ENCODE measurements at regions of chr9 and their contacts with region 1.

Region 1: DNA sequence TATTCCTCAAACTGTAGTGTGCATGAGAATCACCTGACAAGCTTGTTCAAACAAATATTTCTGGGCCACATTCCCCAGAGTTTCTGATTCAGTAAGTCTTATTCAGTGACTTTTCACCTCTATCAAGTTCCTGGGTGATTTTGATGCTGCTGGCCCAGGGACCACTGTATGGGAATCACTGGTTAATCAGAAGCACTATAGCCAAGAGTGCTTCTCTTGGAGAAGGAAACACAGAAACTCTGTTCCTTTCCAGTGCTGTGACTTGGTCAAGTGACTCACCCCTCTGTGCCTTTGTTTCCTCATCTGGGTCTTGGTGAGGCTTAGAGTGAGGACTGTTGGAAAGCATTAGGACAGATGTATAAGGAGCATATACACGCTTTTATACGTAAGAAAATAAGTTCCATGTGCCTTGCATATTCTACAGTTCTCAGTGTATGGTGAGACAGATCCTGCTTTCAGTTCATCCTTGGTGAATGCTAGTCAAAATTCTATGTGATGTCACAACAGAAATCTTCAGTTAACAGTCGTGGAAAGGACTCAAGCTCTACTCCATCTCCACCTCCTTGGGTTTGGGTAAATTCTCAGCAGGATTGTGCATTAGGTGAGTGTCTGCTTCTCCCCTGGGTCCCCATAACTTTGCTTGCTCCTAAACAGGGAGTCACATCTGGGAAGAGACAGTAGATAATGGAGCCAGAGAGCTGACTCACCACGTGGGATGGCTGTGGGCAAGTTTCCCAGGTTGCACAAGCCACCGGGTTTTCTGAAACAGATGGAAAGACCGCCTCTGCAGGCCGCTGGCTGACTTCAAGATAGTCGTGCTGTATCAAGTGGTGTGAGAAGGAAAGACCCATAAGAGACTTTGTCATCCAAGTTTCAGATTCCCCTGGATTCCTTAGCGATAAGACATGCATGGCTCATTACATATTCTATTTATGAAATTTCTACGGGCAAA is 117.0 kb downstream of the NXNL2 start:
- DNase-seq: peak; percentile 87 to 94
- ATAC-seq: peak; percentile 92
- H3K4me3 ChIP-seq: no peak overlapping the region
- H3K27ac ChIP-seq: peak overlapping the region in 1 of 2 donors; percentile 23
- H3K4me1 ChIP-seq: peaks cover 4 to 5% of the 10 kb centered on the region in 2 donors
- H3K27me3 ChIP-seq: no peaks in the 10 kb centered on the region

Region 2: GRCh38 chr9:88559661-88560060 is 92.3 kb before region 1 on chr9:
- intact Hi-C with region 1: no loop called
- DNase-seq: peak in 1 of 2 donors; percentile 34
- ATAC-seq: no peak
- H3K4me3 ChIP-seq: no peak overlapping the region
- H3K27ac ChIP-seq: no peak overlapping the region
- H3K4me1 ChIP-seq: no peaks in the 10 kb centered on the region
- H3K27me3 ChIP-seq: no peaks in the 10 kb centered on the region

Region 3: GRCh38 chr9:88578121-88579054 is 73.6 kb before region 1 on chr9:
- intact Hi-C with region 1: no loop called
- DNase-seq: peak; percentile 88 to 96
- ATAC-seq: peak; percentile 93
- H3K4me3 ChIP-seq: no peak overlapping the region
- H3K27ac ChIP-seq: no peak overlapping the region
- H3K4me1 ChIP-seq: no peaks in the 10 kb centered on the region
- H3K27me3 ChIP-seq: no peaks in the 10 kb centered on the region

Region 4: GRCh38 chr9:88777498-88778312 is 125.7 kb after region 1 on chr9:
- intact Hi-C with region 1: loop called in 1 of 2 experiments (anchors 10 kb)
- DNase-seq: peak in 1 of 2 donors; percentile 60
- ATAC-seq: no peak
- H3K4me3 ChIP-seq: no peak overlapping the region
- H3K27ac ChIP-seq: no peak overlapping the region
- H3K4me1 ChIP-seq: peaks cover 5 to 7% of the 10 kb centered on the region in 2 donors
- H3K27me3 ChIP-seq: no peaks in the 10 kb centered on the region

Measured in aorta (tissue), 5 donors.